ENCODE measurements at regions of chr15 and their contacts with region 1.

Region 1: DNA sequence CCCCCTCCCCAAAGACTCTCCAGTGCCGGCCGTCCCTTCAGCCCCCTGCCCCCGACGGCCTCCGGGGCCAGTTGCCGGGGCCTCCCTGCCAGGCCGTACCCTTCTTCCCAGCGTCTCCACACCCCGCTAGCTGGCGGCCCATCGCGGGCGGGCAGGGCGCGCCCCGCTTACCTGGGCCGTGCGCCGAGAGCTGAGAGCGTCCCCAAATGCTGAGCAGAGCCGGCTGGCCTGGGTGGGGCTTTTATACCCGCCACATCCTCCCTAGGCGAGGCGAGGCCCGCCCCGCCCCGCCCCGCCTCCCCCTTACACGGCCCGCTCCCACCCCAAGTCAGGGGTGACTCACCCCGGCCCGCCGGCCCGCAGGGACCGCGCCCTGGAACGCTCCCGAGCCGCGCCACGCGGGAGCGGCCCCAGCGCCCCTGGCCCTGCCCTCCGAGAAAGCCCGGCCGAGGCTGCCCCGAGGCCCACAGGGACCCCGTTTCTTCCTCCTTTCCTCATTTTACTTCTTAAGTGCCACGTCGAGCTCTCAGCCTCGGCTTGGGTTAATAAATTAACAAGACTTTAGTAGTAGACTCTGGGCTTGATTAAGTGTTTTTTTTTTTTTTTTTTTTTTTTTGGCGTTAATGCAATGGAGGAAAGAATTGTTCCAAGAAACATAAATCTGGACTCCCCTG is at the start of gene ANXA2:
- DNase-seq: no peak
- ATAC-seq: peak; percentile 86
- H3K4me3 ChIP-seq: peak within 1 kb of the TSS; percentile 88
- H3K27ac ChIP-seq: peak within 1 kb of the TSS; percentile 69
- H3K4me1 ChIP-seq: peaks cover 8% of the 10 kb centered on the region; the same call in 1 of the 2 replicates
- H3K27me3 ChIP-seq: no peaks in the 10 kb centered on the region
- CTCF ChIP-seq: no peak
- EP300 ChIP-seq: no peak
- POLR2A ChIP-seq: peak; percentile 96
- RAD21 ChIP-seq: no peak
- polyA plus RNA-seq, gene ANXA2: 507 to 540 TPM

Region 2: DNA sequence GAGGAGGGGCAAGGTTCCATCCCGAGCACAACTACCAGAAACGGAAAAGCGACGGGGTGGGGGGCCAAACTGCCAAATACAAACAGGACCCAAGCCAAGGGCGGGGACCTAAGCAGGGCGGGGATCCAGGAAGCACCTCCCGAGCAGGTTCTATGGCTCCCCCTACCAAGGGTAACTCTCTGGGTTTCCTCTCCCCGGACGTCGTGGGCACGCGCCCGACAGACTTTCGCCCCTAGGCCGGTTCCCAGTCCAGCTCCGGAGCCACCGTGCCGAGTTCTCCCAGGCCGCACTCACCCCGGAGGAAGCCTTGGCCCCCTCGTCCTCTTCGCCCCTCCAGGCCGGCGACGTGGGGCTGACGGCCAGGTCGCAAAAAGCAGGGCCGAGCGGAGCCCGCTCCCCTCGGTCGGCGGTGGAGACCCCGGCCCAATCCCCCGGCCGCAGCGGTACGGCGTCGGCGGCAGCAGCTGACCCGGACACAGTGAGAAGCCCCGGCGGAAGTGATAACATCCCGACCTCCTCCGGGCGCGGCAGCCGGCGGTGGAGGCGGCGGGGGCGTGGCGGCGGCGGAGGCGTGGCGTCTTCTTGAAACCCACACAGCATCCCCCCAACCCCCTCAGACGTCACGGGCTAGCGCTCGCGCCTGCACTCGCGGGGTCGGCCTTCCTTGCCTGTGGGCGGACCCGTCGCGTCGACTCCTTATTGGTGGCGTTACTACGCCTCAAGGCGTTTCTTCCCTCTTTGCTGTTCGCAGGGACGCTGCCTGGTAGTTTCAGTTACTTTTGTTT is 708.9 kb before region 1 on chr15 and contains the start of gene BNIP2:
- CTCF ChIA-PET with region 1: interaction called, 3 read pairs
- POLR2A ChIA-PET with region 1: interaction called, 6 read pairs
- RAD21 ChIA-PET with region 1: no interaction called
- SMC1A ChIA-PET with region 1: no interaction called
- in situ Hi-C with region 1: no loop called
- intact Hi-C with region 1: loop called (anchors 5 kb)
- DNase-seq: peak; percentile 92
- ATAC-seq: peak; percentile 91
- H3K4me3 ChIP-seq: peak within 1 kb of the TSS; percentile 94
- H3K27ac ChIP-seq: peak within 1 kb of the TSS; percentile 98
- H3K4me1 ChIP-seq: peaks cover 9% of the 10 kb centered on the region
- H3K27me3 ChIP-seq: no peaks in the 10 kb centered on the region
- CTCF ChIP-seq: no peak
- EP300 ChIP-seq: no peak
- POLR2A ChIP-seq: peak; percentile 90
- RAD21 ChIP-seq: no peak
- polyA plus RNA-seq, gene BNIP2: 29.9 to 58.5 TPM

Region 3: GRCh38 chr15:59835776-59836175 is 562.1 kb before region 1 on chr15:
- CTCF ChIA-PET with region 1: no interaction called
- POLR2A ChIA-PET with region 1: interaction called, 10 read pairs
- RAD21 ChIA-PET with region 1: no interaction called
- SMC1A ChIA-PET with region 1: no interaction called
- in situ Hi-C with region 1: no loop called
- intact Hi-C with region 1: no loop called
- DNase-seq: no peak
- ATAC-seq: no peak
- H3K4me3 ChIP-seq: no peak overlapping the region
- H3K27ac ChIP-seq: no peak overlapping the region
- H3K4me1 ChIP-seq: no peaks in the 10 kb centered on the region
- H3K27me3 ChIP-seq: 0 out of 4 replicates have a peak, but pooled peaks cover 0 to 2% of the 10 kb centered on the region in 2 experiments
- CTCF ChIP-seq: no peak
- EP300 ChIP-seq: no peak
- POLR2A ChIP-seq: no peak
- RAD21 ChIP-seq: no peak

Region 4: DNA sequence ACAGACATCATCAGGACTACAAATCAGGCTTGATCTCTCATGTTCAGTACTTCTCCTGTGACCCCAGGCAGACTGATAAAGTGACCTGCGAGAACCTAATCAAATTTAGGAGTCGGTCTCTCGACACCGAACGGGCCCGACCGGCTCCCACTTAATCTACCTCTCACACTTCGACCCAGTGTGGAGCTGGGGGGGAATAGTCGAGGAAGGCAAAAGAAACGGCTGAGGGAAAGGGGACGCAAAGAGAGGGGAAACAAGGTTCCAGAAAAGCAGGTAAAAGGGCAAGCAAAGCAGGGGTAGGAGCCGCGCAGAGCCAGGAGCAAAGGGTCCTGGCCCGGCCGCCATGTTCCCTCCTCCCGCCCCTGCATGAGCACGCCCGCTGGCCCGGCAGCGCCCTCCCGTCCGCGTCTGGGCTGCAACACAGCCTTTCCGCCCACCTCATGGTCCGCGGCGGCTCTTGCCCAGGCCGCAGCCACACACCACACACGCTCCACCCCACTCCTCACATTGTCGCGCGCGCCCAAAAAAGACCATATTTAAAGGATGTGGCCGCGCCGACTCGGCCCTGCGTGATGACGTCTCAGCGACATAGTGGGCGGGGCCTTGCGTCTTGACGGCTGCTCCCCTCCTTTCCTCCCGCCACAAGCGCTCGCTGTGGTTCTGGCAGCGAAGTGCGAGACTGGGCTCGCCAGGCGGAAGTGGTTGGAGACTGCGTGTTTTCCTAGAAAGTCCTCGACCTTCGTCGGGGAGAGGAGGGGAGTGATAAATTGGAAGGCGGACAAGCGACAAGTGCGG is 80.9 kb after region 1 on chr15 and contains the start of gene ICE2:
- CTCF ChIA-PET with region 1: interaction called, 4 read pairs
- POLR2A ChIA-PET with region 1: interaction called, 8 read pairs
- RAD21 ChIA-PET with region 1: interaction called, 3 read pairs
- SMC1A ChIA-PET with region 1: interaction called, 3 read pairs
- in situ Hi-C with region 1: no loop called
- intact Hi-C with region 1: loop called (anchors 2 kb)
- DNase-seq: peak; percentile 81
- ATAC-seq: peak; percentile 87
- H3K4me3 ChIP-seq: peak within 1 kb of the TSS; percentile 88
- H3K27ac ChIP-seq: peak within 1 kb of the TSS; percentile 99
- H3K4me1 ChIP-seq: peaks cover 13% of the 10 kb centered on the region
- H3K27me3 ChIP-seq: no peaks in the 10 kb centered on the region
- CTCF ChIP-seq: peak in 2 of 3 experiments; percentile 4 to 7; a peak in 1 of 6 replicates
- EP300 ChIP-seq: peak in 1 of 2 experiments; percentile 5; a peak in 1 of 4 replicates
- POLR2A ChIP-seq: peak; percentile 99
- RAD21 ChIP-seq: no peak
- polyA plus RNA-seq, gene ICE2: 14.2 to 18.7 TPM

Region 5: DNA sequence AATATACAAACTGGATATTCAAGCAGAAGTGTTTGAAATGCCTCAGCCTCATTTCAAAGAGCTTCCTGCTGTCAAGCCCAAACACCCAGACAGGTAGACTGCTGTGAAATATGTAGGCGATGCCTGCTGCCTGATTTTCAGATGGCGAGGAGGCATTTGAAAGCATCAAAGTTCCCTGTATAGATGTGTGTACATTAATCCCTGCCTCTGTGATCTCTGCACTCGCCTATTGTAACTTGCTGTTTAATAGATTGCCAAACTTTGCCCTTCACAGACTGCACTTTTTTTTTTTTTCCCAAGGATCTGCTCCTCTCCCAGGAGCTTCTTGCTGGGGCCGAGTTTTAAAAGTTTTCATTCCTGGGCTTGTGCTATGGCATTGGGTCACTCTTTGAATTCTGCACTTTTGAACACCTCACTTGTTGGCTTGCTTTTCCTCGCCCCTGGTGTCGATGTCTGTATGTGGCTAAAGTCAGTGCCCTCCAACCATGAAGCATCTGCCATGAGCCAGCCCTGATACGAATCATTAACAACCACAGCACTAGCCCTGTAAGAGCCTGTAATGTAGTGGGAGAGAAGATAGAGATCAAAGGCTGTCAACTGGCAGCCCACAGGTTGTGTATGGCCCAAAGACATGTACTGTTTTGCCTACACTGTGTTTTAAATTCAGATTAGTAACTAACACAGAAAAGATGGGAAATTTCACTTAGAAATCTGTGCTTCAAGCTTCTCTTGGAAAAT is 368.7 kb after region 1 on chr15:
- CTCF ChIA-PET with region 1: no interaction called
- POLR2A ChIA-PET with region 1: interaction called, 10 read pairs
- RAD21 ChIA-PET with region 1: no interaction called
- SMC1A ChIA-PET with region 1: no interaction called
- in situ Hi-C with region 1: no loop called
- intact Hi-C with region 1: no loop called
- DNase-seq: no peak
- ATAC-seq: no peak
- H3K4me3 ChIP-seq: no peak overlapping the region
- H3K27ac ChIP-seq: no peak overlapping the region
- H3K4me1 ChIP-seq: no peaks in the 10 kb centered on the region
- H3K27me3 ChIP-seq: no peaks in the 10 kb centered on the region; a peak in 1 of 4 replicates
- CTCF ChIP-seq: no peak
- EP300 ChIP-seq: no peak
- POLR2A ChIP-seq: no peak
- RAD21 ChIP-seq: no peak